Naive thymus-derived CD4-positive, alpha-beta T cell (primary cell): ENCODE measurements at regions of chr14 and their contacts with region 1.

Region 1: DNA sequence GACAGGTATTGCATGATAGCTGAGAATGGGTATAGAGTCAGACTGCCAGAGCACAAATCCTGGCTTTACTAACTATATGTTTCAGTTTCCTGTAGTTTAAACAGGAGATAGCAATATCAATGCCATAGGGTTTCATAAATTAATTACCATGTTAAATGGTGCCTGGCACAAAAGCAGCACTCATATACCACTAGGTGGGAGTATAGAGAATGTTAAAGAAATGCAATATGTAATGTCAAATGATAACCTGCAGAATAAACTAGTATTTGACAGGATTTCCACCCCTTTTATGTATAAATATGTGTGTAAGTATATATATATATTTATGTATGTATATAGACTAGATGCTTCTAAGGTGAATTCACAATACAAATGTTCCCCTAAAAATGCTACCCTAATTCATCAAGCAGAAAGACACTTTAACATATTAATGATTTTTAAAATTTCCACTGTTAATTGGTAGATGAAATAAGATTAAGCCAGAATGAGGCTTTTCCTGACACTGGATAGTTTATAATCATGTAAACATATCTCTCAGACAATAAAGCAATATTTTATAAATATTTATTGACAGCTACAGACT is 8.6 kb downstream of the WDR89 start:
- DNase-seq: peak in 6 of 9 donors; percentile 31 to 65 (median 58)
- ATAC-seq: peak; percentile 92
- H3K4me3 ChIP-seq: no peak overlapping the region
- H3K4me3 Mint-ChIP-seq: no peak overlapping the region
- H3K27ac ChIP-seq: no peak overlapping the region
- H3K27ac Mint-ChIP-seq: peak overlapping the region in 3 of 9 donors; percentile 5 to 64 (median 42)
- H3K4me1 ChIP-seq: peaks cover 0 to 7% of the 10 kb centered on the region in 2 donors
- H3K4me1 Mint-ChIP-seq: peaks cover 29 to 78% (median 63%) of the 10 kb centered on the region in 7 donors
- H3K27me3 ChIP-seq: no peaks in the 10 kb centered on the region
- H3K27me3 Mint-ChIP-seq: no peaks in the 10 kb centered on the region

Region 2: DNA sequence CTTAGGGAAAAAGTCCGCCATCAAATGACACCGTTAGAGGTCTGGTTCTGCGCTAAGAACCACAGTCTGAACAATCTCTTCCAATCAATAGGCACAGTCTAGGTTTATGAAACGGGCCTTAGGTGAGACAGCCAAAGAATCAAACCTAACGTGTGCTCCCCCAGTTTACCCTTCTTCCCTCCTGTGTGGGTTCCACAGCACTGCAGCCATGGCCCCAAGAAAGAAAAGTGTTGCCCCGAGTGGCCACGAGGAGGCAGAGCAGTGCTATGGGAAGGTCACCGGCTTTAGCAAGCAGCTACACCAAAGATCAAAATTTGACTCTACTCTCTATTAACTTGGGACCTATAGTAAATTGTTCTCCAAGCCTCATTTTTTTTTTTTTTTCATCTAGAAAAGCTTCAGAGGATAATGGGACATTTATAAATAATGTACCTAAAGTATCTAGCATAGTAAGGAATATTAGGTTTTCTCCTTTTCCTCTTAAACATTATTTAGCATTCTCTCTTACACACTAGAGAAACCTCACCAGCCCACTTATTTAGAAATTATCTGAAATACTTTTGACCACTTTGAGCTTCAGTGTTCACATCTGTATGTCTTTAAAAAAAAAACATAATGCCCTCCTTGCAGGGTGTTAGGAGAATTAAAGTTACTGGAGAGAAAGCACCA is 244.1 kb before region 1 on chr14:
- CTCF ChIA-PET with region 1: interaction called, 6 read pairs
- POLR2A ChIA-PET with region 1: no interaction called
- intact Hi-C with region 1: loop called in 1 of 2 experiments (anchors 2 kb)
- DNase-seq: peak in 8 of 9 donors; percentile 4 to 52 (median 24)
- ATAC-seq: peak; percentile 86
- H3K4me3 ChIP-seq: no peak overlapping the region
- H3K4me3 Mint-ChIP-seq: no peak overlapping the region
- H3K27ac ChIP-seq: no peak overlapping the region
- H3K27ac Mint-ChIP-seq: peak overlapping the region in 1 of 9 donors; percentile 43
- H3K4me1 ChIP-seq: no peaks in the 10 kb centered on the region
- H3K4me1 Mint-ChIP-seq: peaks cover 0 to 9% (median under 1%) of the 10 kb centered on the region in 7 donors
- H3K27me3 ChIP-seq: no peaks in the 10 kb centered on the region
- H3K27me3 Mint-ChIP-seq: no peaks in the 10 kb centered on the region

Region 3: GRCh38 chr14:63650256-63650952 is 17.4 kb after region 1 on chr14:
- CTCF ChIA-PET with region 1: interaction called, 10 read pairs
- POLR2A ChIA-PET with region 1: interaction called, 24 read pairs
- intact Hi-C with region 1: no loop called
- DNase-seq: peak in 7 of 9 donors; percentile 76 to 92 (median 87)
- ATAC-seq: peak; percentile 98
- H3K4me3 ChIP-seq: peak overlapping the region; percentile 3
- H3K4me3 Mint-ChIP-seq: peak overlapping the region; percentile 38 to 95 (median 75)
- H3K27ac ChIP-seq: peak overlapping the region; percentile 89
- H3K27ac Mint-ChIP-seq: peak overlapping the region; percentile 90 to 100 (median 100)
- H3K4me1 ChIP-seq: peaks cover 25 to 45% of the 10 kb centered on the region in 2 donors
- H3K4me1 Mint-ChIP-seq: peaks cover 21 to 69% (median 53%) of the 10 kb centered on the region in 7 donors
- H3K27me3 ChIP-seq: no peaks in the 10 kb centered on the region
- H3K27me3 Mint-ChIP-seq: no peaks in the 10 kb centered on the region

Region 4: DNA sequence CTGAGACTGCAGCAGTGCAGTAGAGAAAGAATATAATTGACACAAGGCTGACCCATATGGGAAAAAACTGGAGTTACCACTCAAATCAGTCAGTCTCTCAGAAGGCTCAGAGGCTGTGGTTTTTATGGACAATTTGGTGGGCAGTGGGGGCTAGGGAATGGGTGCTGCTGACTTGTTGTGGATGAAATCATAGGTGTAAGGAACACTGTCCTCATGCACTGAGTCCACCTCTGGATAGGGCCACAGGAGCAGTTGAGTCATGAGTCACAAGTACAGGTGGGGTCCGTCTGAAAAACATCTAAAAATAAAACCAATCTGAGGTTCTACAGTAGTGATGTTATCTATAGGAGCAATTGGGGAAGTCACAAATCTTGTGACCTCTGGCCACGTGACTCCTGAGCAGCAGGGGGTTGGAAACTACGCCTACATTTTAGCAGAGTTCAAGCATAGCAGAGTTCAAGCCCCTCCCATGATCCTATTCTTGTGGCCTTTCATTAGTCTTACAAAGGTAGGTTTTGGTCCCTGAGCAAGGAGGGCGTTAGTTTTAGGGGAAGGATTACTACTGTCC is 112.9 kb after region 1 on chr14:
- CTCF ChIA-PET with region 1: interaction called, 7 read pairs
- POLR2A ChIA-PET with region 1: no interaction called
- intact Hi-C with region 1: loop called in 1 of 2 experiments (anchors 1 kb)
- DNase-seq: peak in 1 of 9 donors; percentile 11
- ATAC-seq: peak; percentile 67
- H3K4me3 ChIP-seq: no peak overlapping the region
- H3K4me3 Mint-ChIP-seq: peak overlapping the region in 1 of 10 donors; percentile 1
- H3K27ac ChIP-seq: no peak overlapping the region
- H3K27ac Mint-ChIP-seq: peak overlapping the region; percentile 4 to 68 (median 54)
- H3K4me1 ChIP-seq: peaks cover 0 to 5% of the 10 kb centered on the region in 2 donors
- H3K4me1 Mint-ChIP-seq: peaks cover 8 to 18% (median 17%) of the 10 kb centered on the region in 7 donors
- H3K27me3 ChIP-seq: no peaks in the 10 kb centered on the region
- H3K27me3 Mint-ChIP-seq: peaks cover 0 to 8% (median 0%) of the 10 kb centered on the region in 5 donors

Region 5: DNA sequence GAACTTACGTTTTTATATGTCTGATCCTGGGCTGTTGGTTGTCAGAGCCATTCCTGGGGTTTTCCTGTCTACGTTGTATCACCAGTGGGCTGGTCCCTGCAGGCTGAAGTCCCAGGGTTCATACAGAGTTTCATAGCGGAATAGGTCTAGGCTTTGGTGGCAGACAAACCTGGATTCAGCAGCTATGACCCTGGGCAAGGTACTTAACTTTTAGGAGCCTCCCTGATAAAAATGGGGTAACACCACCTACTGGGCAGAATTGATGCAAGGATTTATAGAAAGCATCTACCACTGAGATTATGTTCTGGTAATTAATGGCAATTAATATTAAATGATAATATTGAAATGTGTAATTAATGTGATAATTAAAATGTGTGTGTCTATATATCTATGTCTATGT is 361.0 kb after region 1 on chr14:
- CTCF ChIA-PET with region 1: no interaction called
- POLR2A ChIA-PET with region 1: no interaction called
- intact Hi-C with region 1: loop called in 1 of 2 experiments (anchors 5 kb)
- DNase-seq: peak in 6 of 9 donors; percentile 17 to 36 (median 18)
- ATAC-seq: no peak
- H3K4me3 ChIP-seq: no peak overlapping the region
- H3K4me3 Mint-ChIP-seq: no peak overlapping the region
- H3K27ac ChIP-seq: no peak overlapping the region
- H3K27ac Mint-ChIP-seq: no peak overlapping the region
- H3K4me1 ChIP-seq: no peaks in the 10 kb centered on the region
- H3K4me1 Mint-ChIP-seq: peaks cover 0 to 12% (median 0%) of the 10 kb centered on the region in 7 donors
- H3K27me3 ChIP-seq: no peaks in the 10 kb centered on the region
- H3K27me3 Mint-ChIP-seq: no peaks in the 10 kb centered on the region

Region 6: GRCh38 chr14:64549781-64550620 is 917.0 kb after region 1 on chr14 and contains the start of gene PPP1R36:
- CTCF ChIA-PET with region 1: no interaction called
- POLR2A ChIA-PET with region 1: no interaction called
- intact Hi-C with region 1: no loop called
- DNase-seq: peak; percentile 10 to 54 (median 29)
- ATAC-seq: peak; percentile 94
- H3K4me3 ChIP-seq: peak within 1 kb of the TSS; percentile 52
- H3K4me3 Mint-ChIP-seq: peak within 1 kb of the TSS; percentile 67 to 89 (median 82)
- H3K27ac ChIP-seq: no peak within 1 kb of the TSS
- H3K27ac Mint-ChIP-seq: peak within 1 kb of the TSS in 7 of 9 donors; percentile 13 to 89 (median 67)
- H3K4me1 ChIP-seq: peaks cover 0 to 13% of the 10 kb centered on the region in 2 donors
- H3K4me1 Mint-ChIP-seq: peaks cover 9 to 20% (median 15%) of the 10 kb centered on the region in 7 donors
- H3K27me3 ChIP-seq: no peaks in the 10 kb centered on the region
- H3K27me3 Mint-ChIP-seq: peaks cover 0 to 68% (median 5%) of the 10 kb centered on the region in 5 donors
- total RNA-seq, gene PPP1R36: 0.31 TPM in 1 of 5 experiments, not detected in the others